ENCODE measurements at regions of chr3 and their contacts with region 1.

Region 1: GRCh38 chr3:190424478-190425439 is 24.9 kb downstream of the TMEM207 start:
- DNase-seq: peak; percentile 64 to 78 (median 76)
- H3K4me3 ChIP-seq: no peak overlapping the region
- H3K27ac ChIP-seq: no peak overlapping the region
- H3K4me1 ChIP-seq: no peaks in the 10 kb centered on the region
- H3K27me3 ChIP-seq: peaks cover 0 to 26% (median 4%) of the 10 kb centered on the region in 5 experiments

Region 2: GRCh38 chr3:190224863-190225692 is 199.7 kb before region 1 on chr3:
- CTCF ChIA-PET with region 1: interaction called, 14 read pairs
- POLR2A ChIA-PET with region 1: no interaction called
- DNase-seq: peak; percentile 32 to 60 (median 56)
- H3K4me3 ChIP-seq: no peak overlapping the region
- H3K27ac ChIP-seq: no peak overlapping the region
- H3K4me1 ChIP-seq: no peaks in the 10 kb centered on the region
- H3K27me3 ChIP-seq: peaks cover 0 to 8% (median 1%) of the 10 kb centered on the region in 5 experiments

Region 3: DNA sequence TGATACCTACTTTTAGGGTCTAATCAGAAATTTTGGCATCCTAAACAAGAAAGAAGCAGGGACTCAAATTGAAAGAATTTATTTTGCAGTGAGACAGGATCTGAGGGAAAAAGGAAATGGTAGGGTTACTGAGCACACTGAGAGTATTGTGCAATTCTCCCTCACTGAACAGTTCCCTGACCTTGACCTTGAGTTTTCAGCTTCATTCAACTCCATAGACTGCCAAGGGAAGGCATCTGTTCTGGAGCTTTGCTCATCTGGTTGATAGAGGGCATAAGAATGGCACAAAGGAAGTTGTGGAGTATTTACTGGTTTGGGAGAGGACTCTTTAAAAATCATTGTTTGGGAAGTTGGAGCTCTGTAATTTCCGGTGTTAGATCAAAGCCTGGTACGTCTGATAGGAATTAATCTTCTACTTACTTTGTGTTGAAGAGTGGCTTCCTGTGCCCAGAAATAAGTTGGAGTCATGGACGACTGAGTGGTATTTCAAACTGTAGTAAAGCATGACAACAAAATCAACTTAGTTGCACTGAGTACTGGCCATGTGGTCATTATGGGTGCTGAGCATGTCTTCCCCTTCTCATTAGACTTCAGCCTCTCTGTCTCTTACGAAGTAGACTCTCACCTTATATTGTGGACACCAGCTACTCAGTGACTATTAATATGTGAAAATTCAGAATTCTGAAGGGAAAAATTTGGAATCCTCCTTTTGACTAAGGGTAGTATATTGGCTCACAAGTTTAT is 143.3 kb before region 1 on chr3:
- CTCF ChIA-PET with region 1: no interaction called
- POLR2A ChIA-PET with region 1: no interaction called
- DNase-seq: no peak
- H3K4me3 ChIP-seq: no peak overlapping the region
- H3K27ac ChIP-seq: no peak overlapping the region
- H3K4me1 ChIP-seq: no peaks in the 10 kb centered on the region
- H3K27me3 ChIP-seq: no peaks in the 10 kb centered on the region

Region 4: DNA sequence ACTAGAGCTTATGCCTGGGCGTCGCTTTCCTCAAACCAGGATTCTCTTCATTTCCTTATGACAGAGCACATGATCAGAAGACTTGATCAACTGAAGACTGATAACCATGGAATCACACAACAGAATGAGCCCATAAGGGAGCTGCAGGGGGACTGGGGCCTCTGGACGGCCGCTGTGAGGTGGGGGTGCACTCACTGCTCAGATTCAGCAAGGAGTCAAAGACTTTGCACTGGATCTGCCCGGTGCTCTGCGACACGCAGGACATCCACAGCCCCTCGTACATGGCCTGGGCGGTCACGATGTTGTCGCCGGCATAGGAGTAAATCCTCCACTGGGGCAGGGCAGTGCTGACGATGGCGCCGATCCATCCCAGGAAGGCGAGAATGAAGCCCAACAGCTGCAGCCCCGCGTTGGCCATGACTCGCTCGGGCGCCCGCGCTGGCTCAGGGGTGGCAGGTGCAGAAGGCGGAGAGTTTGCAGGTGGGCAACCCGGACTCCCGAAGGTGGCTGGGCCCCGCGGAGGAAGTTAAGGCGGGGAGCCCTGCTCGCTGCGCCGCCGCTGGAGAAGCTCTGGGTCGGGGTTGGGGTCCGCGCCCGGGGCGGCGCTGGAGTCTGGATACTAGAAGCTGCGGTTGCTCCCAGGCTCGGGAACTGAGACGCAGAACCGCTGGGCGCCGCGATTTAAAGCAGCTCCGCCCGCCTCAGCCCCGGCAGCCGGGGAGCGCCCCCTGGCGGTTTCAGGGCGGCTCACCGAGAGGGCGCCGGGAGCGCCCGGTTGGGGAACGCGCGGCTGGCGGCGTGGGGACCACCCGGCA is 102.8 kb before region 1 on chr3 and contains the start of gene CLDN1:
- CTCF ChIA-PET with region 1: interaction called, 11 read pairs
- POLR2A ChIA-PET with region 1: interaction called, 3 read pairs
- DNase-seq: peak; percentile 59 to 78 (median 76)
- H3K4me3 ChIP-seq: peak within 1 kb of the TSS; percentile 19 to 72 (median 45)
- H3K27ac ChIP-seq: no peak within 1 kb of the TSS
- H3K4me1 ChIP-seq: peaks cover 0 to 20% (median 17%) of the 10 kb centered on the region in 4 experiments
- H3K27me3 ChIP-seq: peaks cover 2 to 78% (median 19%) of the 10 kb centered on the region in 5 experiments

Region 5: GRCh38 chr3:190352866-190353457 is 71.8 kb before region 1 on chr3:
- CTCF ChIA-PET with region 1: no interaction called
- POLR2A ChIA-PET with region 1: no interaction called
- DNase-seq: no peak
- H3K4me3 ChIP-seq: no peak overlapping the region
- H3K27ac ChIP-seq: no peak overlapping the region
- H3K4me1 ChIP-seq: no peaks in the 10 kb centered on the region
- H3K27me3 ChIP-seq: no peaks in the 10 kb centered on the region

Region 6: DNA sequence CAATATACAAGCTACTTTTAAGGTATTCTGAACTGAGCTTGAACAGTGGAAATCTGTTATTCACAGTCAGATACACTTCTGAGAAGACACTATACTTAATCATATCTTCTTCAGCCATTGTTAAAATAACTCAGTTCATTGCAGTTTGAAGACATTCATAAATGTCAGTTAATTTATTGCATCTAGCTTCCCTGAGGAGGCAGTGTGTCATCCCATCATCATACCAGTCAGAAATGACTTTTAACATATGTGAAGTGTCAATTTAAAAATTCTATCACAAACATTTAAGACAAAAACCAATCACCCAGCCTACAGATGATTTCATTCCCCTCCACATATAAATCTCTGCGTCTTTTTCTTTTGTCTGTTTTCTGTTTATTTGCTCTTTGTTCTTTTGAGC is 17.5 kb after region 1 on chr3:
- CTCF ChIA-PET with region 1: interaction called, 12 read pairs
- POLR2A ChIA-PET with region 1: interaction called, 5 read pairs
- DNase-seq: no peak
- H3K4me3 ChIP-seq: no peak overlapping the region
- H3K27ac ChIP-seq: no peak overlapping the region
- H3K4me1 ChIP-seq: peaks cover 10 to 22% (median 11%) of the 10 kb centered on the region in 4 experiments
- H3K27me3 ChIP-seq: peaks cover 0 to 32% (median 3%) of the 10 kb centered on the region in 5 experiments

Region 7: GRCh38 chr3:190739641-190740185 is 315.0 kb after region 1 on chr3:
- CTCF ChIA-PET with region 1: no interaction called
- POLR2A ChIA-PET with region 1: no interaction called
- DNase-seq: no peak
- H3K4me3 ChIP-seq: no peak overlapping the region
- H3K27ac ChIP-seq: no peak overlapping the region
- H3K4me1 ChIP-seq: no peaks in the 10 kb centered on the region
- H3K27me3 ChIP-seq: no peaks in the 10 kb centered on the region

Measured in common myeloid progenitor, CD34-positive (primary cell).